ENCODE measurements at regions of chr16 and their contacts with region 1.

Region 1: GRCh38 chr16:50665128-50665878 is 15.8 kb downstream of the SNX20 start:
- DNase-seq: peak; percentile 76 to 84 (median 79)
- H3K4me3 ChIP-seq: peak overlapping the region; percentile 37 to 61
- H3K4me3 Mint-ChIP-seq: peak overlapping the region; percentile 75 to 86 (median 82)
- H3K27ac ChIP-seq: peak overlapping the region; percentile 41
- H3K27ac Mint-ChIP-seq: peak overlapping the region; percentile 73 to 95 (median 90)
- H3K4me1 ChIP-seq: peaks cover 40% of the 10 kb centered on the region
- H3K4me1 Mint-ChIP-seq: peaks cover 21 to 43% (median 32%) of the 10 kb centered on the region in 4 donors
- H3K27me3 ChIP-seq: no peaks in the 10 kb centered on the region
- H3K27me3 Mint-ChIP-seq: no peaks in the 10 kb centered on the region

Region 2: DNA sequence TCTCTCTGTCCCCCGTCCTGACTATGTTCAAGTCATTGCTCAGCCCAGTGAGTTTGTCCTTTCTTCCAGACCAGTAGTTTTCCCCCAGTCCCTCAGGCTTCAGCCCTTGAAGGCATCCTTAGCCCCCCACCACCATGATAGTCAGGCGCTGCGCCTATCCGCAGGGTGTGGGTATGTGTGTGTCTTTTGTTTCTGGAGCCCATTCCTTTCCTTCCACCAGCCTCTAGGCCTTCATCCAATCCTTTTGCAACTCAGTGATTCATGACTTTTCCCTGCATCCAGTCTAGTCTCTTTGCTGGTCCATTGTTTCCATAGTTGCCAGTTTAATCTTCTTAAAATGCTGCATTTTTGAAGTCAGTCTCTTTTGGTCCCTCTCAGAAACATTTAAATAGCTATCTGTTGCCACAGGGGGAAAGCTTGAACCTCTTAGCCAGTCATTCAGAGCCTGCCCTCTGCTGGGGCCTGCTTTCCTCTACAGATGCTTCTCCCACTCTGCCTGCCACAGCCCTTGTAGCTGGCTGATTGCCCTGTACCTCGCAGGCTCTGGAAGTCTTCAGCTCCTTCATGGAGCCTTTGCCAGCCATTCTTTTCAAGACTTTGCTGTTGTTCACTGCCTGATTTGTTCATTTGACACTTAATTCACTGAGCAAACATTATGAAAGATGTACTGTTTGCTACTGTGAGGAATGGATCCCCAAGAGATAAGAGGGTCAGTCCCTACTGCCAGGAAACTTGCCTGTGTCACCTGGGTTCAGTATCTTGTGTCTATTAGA is 454.9 kb before region 1 on chr16:
- CTCF ChIA-PET with region 1: interaction called, 69 read pairs
- POLR2A ChIA-PET with region 1: interaction called, 3 read pairs
- intact Hi-C with region 1: loop called (anchors 1 kb)
- DNase-seq: peak; percentile 53 to 63 (median 56)
- H3K4me3 ChIP-seq: no peak overlapping the region
- H3K4me3 Mint-ChIP-seq: no peak overlapping the region
- H3K27ac ChIP-seq: no peak overlapping the region
- H3K27ac Mint-ChIP-seq: peak overlapping the region; percentile 17 to 91 (median 59)
- H3K4me1 ChIP-seq: peaks cover 4% of the 10 kb centered on the region
- H3K4me1 Mint-ChIP-seq: peaks cover 16 to 26% (median 26%) of the 10 kb centered on the region in 4 donors
- H3K27me3 ChIP-seq: no peaks in the 10 kb centered on the region
- H3K27me3 Mint-ChIP-seq: no peaks in the 10 kb centered on the region

Region 3: DNA sequence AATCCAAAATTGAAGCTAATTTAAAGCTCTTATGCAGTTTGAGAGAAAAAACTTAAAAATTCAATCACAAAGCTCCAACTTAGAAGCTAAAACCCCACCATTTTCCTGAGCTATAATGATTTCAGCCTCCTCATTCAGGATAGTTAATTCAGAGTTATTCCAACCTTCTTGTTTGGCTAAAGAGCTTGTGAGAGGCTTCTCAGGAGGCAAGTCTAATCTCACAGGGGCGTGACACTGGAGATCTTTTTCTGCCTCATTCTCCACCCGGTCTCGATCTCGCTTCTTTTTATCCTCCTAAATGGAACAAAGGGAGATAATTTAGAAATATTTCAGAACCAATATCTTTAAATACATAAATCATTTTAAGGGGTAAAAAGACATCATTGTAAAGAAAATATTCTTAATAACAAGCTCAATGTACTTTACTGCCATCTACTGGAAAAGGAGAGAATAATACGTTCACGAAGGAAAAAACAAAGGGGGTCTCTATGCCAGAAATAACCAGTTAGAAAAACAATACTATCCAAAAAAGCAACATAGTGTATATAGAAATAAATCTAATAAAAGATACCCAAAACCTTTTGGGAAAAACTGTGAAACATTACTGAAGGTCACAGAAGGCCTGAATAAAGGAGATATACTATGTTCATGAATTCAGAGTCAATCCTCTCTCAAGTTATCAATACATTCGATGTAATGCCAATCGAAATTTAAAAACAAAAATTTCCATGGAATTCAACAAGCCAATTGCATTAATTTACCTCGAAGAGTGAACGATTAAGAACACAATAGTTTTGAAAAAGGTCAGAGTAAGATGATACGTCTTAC is 310.5 kb before region 1 on chr16:
- CTCF ChIA-PET with region 1: interaction called, 127 read pairs
- POLR2A ChIA-PET with region 1: interaction called, 3 read pairs
- intact Hi-C with region 1: no loop called
- DNase-seq: peak in 4 of 5 donors; percentile 42 to 61 (median 54)
- H3K4me3 ChIP-seq: no peak overlapping the region
- H3K4me3 Mint-ChIP-seq: no peak overlapping the region
- H3K27ac ChIP-seq: no peak overlapping the region
- H3K27ac Mint-ChIP-seq: peak overlapping the region in 6 of 7 donors; percentile 0 to 89 (median 41)
- H3K4me1 ChIP-seq: peaks cover 3% of the 10 kb centered on the region
- H3K4me1 Mint-ChIP-seq: peaks cover 10 to 36% (median 23%) of the 10 kb centered on the region in 4 donors
- H3K27me3 ChIP-seq: no peaks in the 10 kb centered on the region
- H3K27me3 Mint-ChIP-seq: no peaks in the 10 kb centered on the region

Region 4: DNA sequence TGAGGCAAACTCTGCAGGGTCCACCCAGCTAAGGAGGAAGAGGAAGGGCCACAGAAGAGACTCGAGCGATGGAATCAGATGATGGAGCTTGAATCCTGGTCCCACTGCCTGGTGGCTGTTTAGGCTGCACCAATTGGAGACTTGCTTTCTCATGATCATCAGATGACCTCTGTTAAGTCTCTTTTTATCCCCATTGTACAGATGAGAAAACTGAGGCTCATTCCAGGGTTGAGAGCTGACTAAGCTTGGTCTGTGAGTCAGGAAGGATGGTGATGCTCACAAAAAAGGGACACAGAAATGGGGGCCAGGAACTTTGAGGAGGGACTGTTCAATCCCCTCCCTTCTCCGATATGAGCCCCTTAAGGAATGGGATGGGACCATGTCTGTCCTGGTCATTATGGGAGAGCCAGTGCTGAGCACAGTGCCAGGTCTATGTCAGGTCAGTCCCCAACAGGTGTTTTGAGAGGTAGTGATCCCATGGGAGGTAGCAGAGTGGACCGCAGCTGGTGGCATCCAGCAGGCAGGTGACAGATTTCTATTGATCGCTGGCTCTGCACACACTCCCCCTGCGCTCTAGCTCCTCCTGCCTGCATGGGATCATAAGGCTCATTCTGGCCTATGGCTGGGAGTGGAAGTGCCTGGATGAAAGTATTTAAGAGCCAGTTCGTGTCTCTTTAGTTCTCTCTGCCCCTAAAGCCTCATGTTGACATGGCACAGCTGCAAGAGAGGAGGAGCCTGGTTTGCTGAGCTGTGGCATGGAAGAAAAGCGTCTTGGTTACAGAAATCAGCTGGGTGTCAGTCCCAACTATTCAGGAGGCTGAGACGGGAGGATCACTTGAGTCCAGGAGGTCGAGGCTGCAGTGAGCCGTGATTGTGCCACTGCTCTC is 11.4 kb before region 1 on chr16:
- CTCF ChIA-PET with region 1: interaction called, 24 read pairs
- POLR2A ChIA-PET with region 1: interaction called, 3 read pairs
- intact Hi-C with region 1: no loop called
- DNase-seq: no peak
- H3K4me3 ChIP-seq: no peak overlapping the region
- H3K4me3 Mint-ChIP-seq: no peak overlapping the region
- H3K27ac ChIP-seq: no peak overlapping the region
- H3K27ac Mint-ChIP-seq: no peak overlapping the region
- H3K4me1 ChIP-seq: no peaks in the 10 kb centered on the region
- H3K4me1 Mint-ChIP-seq: peaks cover 0 to 4% (median 1%) of the 10 kb centered on the region in 4 donors
- H3K27me3 ChIP-seq: no peaks in the 10 kb centered on the region
- H3K27me3 Mint-ChIP-seq: peaks cover 0 to 2% of the 10 kb centered on the region in 2 donors

Region 5: GRCh38 chr16:50741808-50742575 is 76.7 kb after region 1 on chr16 and contains the start of gene CYLD:
- CTCF ChIA-PET with region 1: interaction called, 242 read pairs
- POLR2A ChIA-PET with region 1: interaction called, 478 read pairs
- intact Hi-C with region 1: loop called (anchors 1 kb)
- DNase-seq: peak; percentile 99 to 100 (median 100)
- H3K4me3 ChIP-seq: peak within 1 kb of the TSS; percentile 72 to 80
- H3K4me3 Mint-ChIP-seq: peak within 1 kb of the TSS; percentile 95 to 99 (median 98)
- H3K27ac ChIP-seq: peak within 1 kb of the TSS; percentile 100
- H3K27ac Mint-ChIP-seq: peak within 1 kb of the TSS; percentile 95 to 99 (median 99)
- H3K4me1 ChIP-seq: peaks cover 38% of the 10 kb centered on the region
- H3K4me1 Mint-ChIP-seq: peaks cover 22 to 62% (median 35%) of the 10 kb centered on the region in 4 donors
- H3K27me3 ChIP-seq: no peaks in the 10 kb centered on the region
- H3K27me3 Mint-ChIP-seq: no peaks in the 10 kb centered on the region
- total RNA-seq, gene CYLD: 294 to 299 TPM

Region 6: DNA sequence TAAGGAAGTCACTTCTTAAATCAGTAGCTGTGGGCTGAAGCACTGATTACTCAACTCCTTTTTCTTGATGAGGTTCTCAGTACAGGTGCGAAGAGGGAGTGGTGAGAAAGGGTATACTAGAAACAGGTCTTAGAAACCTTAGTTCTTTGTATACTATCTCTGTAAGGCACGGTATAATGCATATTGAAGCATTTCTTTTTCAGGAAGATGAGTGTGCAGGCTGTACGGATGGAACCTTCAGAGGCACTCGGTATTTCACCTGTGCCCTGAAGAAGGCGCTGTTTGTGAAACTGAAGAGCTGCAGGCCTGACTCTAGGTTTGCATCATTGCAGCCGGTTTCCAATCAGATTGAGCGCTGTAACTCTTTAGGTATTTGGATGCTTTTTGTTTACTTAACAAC is 115.7 kb after region 1 on chr16:
- CTCF ChIA-PET with region 1: interaction called, 22 read pairs
- POLR2A ChIA-PET with region 1: interaction called, 4 read pairs
- intact Hi-C with region 1: no loop called
- DNase-seq: peak in 4 of 5 donors; percentile 33 to 59 (median 49)
- H3K4me3 ChIP-seq: no peak overlapping the region
- H3K4me3 Mint-ChIP-seq: peak overlapping the region; percentile 40 to 86 (median 77)
- H3K27ac ChIP-seq: peak overlapping the region; percentile 32
- H3K27ac Mint-ChIP-seq: peak overlapping the region; percentile 88 to 98 (median 95)
- H3K4me1 ChIP-seq: peaks cover 63% of the 10 kb centered on the region
- H3K4me1 Mint-ChIP-seq: peaks cover 40 to 74% (median 53%) of the 10 kb centered on the region in 4 donors
- H3K27me3 ChIP-seq: no peaks in the 10 kb centered on the region
- H3K27me3 Mint-ChIP-seq: no peaks in the 10 kb centered on the region

Region 7: GRCh38 chr16:50942143-50942542 is 276.8 kb after region 1 on chr16:
- CTCF ChIA-PET with region 1: no interaction called
- POLR2A ChIA-PET with region 1: no interaction called
- intact Hi-C with region 1: no loop called
- DNase-seq: no peak
- H3K4me3 ChIP-seq: no peak overlapping the region
- H3K4me3 Mint-ChIP-seq: no peak overlapping the region
- H3K27ac ChIP-seq: no peak overlapping the region
- H3K27ac Mint-ChIP-seq: no peak overlapping the region
- H3K4me1 ChIP-seq: no peaks in the 10 kb centered on the region
- H3K4me1 Mint-ChIP-seq: no peaks in the 10 kb centered on the region
- H3K27me3 ChIP-seq: no peaks in the 10 kb centered on the region
- H3K27me3 Mint-ChIP-seq: peaks cover 3 to 10% of the 10 kb centered on the region in 2 donors